ENCODE measurements at regions of chr11 and their contacts with region 1.

Region 1: DNA sequence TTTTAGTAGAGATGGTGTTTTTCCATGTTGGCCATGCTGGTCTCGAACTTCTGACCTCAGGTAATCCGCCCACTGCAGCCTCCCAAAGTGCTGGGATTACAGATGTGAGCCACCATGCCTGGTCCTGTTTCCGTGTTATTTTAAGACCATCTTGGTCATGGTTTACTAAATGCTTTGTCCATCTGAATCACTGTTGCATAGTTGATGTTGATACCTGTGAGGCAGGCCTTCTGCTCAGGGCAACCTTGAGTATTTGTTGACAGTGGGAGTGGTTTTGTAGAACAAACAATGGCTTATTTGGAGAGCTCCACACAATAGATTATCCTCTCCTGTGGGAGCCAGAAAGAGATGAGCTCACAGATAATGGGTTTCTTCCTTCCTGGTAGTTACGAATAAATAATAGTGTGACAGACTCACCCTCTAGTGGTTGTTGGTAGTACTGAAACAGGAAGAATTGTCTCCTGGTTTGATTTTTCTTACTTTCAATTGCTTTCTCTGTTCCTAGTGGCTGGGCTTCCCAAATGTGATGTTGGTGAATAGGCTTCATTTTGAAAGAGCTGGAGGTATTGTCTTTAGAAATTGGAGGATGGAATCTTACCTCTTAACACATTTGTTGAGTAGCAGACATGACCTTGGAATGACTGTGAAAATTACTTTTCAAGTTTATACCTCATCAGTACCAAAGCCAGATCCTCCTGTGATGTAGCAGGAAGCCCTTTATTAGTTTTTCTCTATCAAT is 39.0 kb downstream of the CTNND1 start:
- DNase-seq: no peak
- H3K4me3 ChIP-seq: no peak overlapping the region
- H3K27ac ChIP-seq: peak overlapping the region; percentile 55 to 76 (median 70)
- H3K4me1 ChIP-seq: peaks cover 0 to 42% (median 35%) of the 10 kb centered on the region in 4 donors
- H3K27me3 ChIP-seq: no peaks in the 10 kb centered on the region
- CTCF ChIP-seq: peak; percentile 75 to 96 (median 83)
- EP300 ChIP-seq: no peak
- POLR2A ChIP-seq: no peak

Region 2: DNA sequence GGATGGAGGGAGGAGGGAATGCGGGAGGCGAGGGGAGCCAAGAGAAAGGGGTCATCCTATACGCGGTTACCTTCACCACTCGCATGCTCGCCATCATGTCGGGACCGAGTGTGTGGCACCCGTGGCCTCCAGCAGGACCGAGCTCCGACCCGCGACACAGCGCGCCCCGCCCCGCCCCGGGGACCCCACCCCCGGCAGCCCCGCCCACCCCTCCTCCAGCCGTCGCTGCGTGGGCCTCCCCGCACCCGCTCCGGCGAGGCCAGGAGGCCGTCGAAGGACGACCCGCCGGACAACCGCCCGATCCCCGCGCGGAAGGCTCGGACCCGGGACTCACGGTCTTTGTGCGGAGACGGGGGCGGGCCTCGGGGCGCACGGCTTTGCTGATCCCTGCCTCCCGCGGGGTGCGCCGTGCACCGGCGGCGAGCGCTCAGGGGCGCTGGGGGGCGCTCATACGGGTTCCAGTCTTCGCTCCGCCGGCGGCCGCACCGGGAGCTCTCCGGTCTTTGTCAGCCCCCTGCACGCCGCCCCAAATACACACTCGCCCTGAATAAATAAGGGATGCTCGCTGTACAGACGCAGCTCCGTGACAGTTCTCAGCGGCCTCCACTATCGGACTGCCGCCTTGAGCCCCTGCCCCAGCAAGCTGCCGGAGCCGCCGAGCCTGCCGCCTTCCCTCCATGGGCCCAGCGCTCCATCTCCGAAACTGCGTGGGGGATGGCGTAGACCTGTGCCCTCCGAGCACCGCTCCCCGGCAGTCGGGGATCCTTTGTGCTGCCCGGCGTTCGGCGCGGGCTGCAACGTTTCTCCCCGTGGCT is 232.9 kb before region 1 on chr11 and contains the start of gene UBE2L6:
- intact Hi-C with region 1: loop called (anchors 10 kb)
- DNase-seq: peak; percentile 74
- H3K4me3 ChIP-seq: peak within 1 kb of the TSS; percentile 66 to 94 (median 76)
- H3K27ac ChIP-seq: peak within 1 kb of the TSS; percentile 83 to 86 (median 85)
- H3K4me1 ChIP-seq: peaks cover 0 to 26% (median 19%) of the 10 kb centered on the region in 4 donors
- H3K27me3 ChIP-seq: no peaks in the 10 kb centered on the region
- CTCF ChIP-seq: peak in 2 of 4 experiments; percentile 82 to 92
- EP300 ChIP-seq: no peak
- POLR2A ChIP-seq: no peak
- total RNA-seq, gene UBE2L6: 26.5 to 37.8 (median 32.5) TPM

Region 3: DNA sequence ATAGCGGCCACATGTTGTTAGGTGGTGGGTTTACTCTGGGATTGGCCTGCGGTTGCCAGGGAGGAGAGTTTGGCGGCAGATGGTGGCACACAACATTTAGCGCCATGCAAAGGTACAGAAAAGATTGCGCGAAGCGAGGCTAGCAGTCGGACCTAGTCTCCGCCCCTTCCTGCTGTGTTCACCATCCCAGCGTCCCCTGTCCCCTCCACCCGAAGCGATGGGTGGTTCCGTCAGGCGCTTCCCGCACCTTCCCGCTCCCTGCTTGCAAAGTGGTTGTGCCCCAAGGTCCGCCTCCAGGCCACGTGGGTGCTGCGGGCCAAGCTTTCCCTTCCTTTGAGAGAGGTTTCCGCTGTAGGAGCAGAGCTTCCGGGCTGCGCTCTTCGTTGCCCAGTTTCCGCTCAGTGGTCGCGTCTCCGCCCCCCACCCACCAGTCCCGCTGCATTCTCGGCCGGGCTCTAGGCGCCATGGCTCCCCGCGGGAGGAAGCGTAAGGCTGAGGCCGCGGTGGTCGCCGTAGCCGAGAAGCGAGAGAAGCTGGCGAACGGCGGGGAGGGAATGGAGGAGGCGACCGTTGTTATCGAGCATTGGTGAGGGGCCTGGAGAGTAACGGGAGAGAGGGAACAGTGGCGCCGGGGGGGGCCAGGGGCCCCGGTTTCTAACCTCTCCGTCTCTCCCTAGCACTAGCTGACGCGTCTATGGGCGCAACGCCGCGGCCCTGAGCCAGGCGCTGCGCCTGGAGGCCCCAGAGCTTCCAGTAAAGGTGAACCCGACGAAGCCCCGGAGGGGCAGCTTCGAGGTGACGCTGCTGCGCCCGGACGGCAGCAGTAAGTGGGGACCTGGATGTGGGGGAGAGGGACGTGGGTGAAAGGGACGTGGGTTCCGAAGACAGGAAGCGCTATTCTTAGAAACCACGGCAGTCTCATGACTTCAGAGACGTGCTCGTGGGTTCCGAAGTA is 59.2 kb before region 1 on chr11 and contains the start of gene SELENOH:
- intact Hi-C with region 1: loop called (anchors 2 kb)
- DNase-seq: peak; percentile 99
- H3K4me3 ChIP-seq: peak within 1 kb of the TSS; percentile 75 to 90 (median 88)
- H3K27ac ChIP-seq: peak within 1 kb of the TSS; percentile 93 to 97 (median 96)
- H3K4me1 ChIP-seq: peaks cover 0 to 21% (median 17%) of the 10 kb centered on the region in 4 donors
- H3K27me3 ChIP-seq: no peaks in the 10 kb centered on the region
- CTCF ChIP-seq: no peak
- EP300 ChIP-seq: peak in 1 of 4 donors; percentile 21
- POLR2A ChIP-seq: peak; percentile 70 to 85
- total RNA-seq, gene SELENOH: 130 to 188 (median 132) TPM

Region 4: DNA sequence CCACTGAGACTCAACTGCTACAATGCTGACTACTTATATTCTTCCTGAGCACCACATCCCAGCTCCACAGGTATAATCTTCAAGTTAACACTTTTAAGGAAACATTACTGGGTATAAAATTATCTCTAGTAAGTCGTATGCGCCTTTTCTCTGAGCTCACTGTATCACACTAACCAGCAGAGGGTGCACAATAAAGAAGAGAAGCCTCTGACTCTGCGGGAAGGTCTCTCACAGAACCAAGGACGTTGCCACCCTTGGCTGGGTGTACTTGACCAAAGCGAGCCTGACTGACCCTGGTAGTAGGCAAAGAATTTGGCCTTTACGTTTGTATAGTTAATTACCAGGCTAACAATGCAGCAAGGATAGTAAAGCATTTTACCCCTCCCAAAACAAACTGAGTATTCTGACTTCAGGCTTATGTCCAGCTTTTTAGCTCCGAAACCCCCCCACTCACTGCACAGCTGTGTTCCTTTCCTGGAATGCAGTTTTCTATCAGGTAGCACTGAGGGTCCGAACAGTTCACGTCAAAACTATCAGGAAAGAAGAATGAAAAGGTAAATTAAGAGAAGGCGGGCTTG is 48.8 kb before region 1 on chr11 and contains the start of gene BTBD18:
- intact Hi-C with region 1: loop called (anchors 2 kb)
- DNase-seq: no peak
- H3K4me3 ChIP-seq: no peak within 1 kb of the TSS
- H3K27ac ChIP-seq: no peak within 1 kb of the TSS
- H3K4me1 ChIP-seq: no peaks in the 10 kb centered on the region
- H3K27me3 ChIP-seq: no peaks in the 10 kb centered on the region
- CTCF ChIP-seq: peak in 2 of 4 experiments; percentile 29 to 30
- EP300 ChIP-seq: no peak
- POLR2A ChIP-seq: no peak
- total RNA-seq, gene BTBD18: not detected

Region 5: DNA sequence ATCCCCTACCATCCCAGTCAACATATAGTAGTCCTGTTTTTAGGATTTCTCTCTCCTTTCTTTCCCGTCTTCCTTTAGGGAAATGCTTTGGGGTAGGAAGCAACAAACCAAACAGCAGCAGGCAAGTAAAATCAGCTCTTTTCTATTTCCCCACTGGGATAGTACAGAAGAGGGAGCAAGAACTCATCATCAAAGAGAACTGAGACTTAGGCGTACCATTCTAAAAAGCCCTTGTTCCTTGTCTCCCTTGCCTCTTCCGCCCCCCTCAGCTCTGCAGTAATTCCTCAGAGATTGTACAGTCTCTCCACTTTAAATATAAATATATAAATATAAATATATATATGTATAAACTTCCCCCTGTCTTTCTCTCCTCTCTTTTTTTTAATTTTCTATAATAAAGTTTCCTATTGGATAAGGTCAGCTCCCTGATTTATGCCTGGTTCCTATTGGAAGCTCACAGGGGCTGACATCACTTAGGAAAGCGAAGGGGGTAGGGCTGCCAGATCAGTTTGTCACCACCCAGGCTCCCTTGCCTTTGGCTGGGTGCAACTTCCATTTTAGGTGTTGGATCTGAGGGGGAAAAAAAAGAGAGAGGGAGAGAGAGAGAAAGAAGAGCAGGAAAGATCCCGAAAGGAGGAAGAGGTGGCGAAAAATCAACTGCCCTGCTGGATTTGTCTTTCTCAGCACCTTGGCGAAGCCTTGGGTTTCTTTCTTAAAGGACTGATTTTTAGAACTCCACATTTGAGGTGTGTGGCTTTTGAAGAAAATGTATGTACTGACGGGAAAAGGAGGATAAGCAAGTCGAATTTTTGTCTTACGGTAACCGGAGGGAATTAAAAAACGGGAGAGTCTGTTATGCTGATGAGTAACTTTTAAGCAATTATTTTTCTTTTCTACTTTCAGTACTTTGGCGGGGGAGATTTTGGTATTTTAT is 39.0 kb before region 1 on chr11 and contains the start of gene CTNND1:
- intact Hi-C with region 1: loop called (anchors 1 kb)
- DNase-seq: peak; percentile 97
- H3K4me3 ChIP-seq: peak within 1 kb of the TSS; percentile 58 to 63 (median 60)
- H3K27ac ChIP-seq: peak within 1 kb of the TSS; percentile 87 to 94 (median 90)
- H3K4me1 ChIP-seq: peaks cover 0 to 29% (median 28%) of the 10 kb centered on the region in 4 donors
- H3K27me3 ChIP-seq: no peaks in the 10 kb centered on the region
- CTCF ChIP-seq: no peak
- EP300 ChIP-seq: peak in 2 of 4 donors; percentile 13 to 28
- POLR2A ChIP-seq: peak; percentile 82 to 94
- total RNA-seq, gene CTNND1: 66.0 to 102 (median 86.9) TPM